Gastrocnemius medialis (tissue), 4 donors: ENCODE measurements at regions of chr11 and their contacts with region 1.

Region 1: DNA sequence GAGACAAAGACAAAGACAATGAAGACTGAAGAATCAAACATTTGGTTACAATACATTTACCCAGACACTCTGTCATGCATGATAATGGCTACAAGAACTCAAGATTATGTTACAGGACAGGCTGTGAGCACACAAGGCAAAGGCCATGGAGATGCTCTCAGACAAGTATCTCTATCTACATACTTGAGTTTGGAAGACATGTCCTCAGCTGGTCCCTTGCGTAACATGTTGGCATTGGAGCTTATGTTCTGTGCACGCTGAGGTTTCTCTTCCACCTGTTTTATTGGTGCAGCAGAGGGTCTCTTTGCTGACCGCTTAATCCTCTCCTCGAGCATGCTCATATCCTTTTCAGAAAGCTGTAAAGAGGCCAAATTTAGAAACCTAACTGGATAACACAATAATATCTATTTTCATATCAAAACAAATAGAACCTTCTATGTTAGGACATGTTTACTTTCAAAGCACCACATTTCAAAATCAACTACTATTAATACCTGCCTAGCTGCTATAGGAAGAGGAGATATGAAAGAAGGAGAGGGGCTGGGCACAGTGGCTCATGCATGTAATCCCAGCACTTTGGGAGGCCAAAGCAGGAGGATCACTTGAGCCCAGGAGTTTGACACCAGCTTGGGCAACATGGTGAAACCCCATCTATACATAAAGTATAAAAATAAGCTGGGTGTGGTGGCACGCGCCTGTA is 41.6 kb downstream of the F2 start:
- DNase-seq: peak; percentile 63 to 87
- ATAC-seq: peak; percentile 77 to 91
- H3K4me3 ChIP-seq: no peak overlapping the region
- H3K27ac ChIP-seq: peak overlapping the region; percentile 73 to 84 (median 82)
- H3K4me1 ChIP-seq: peaks cover 0 to 15% of the 10 kb centered on the region in 2 donors
- H3K27me3 ChIP-seq: no peaks in the 10 kb centered on the region
- CTCF ChIP-seq: no peak
- POLR2A ChIP-seq: peak in 1 of 2 donors; percentile 46

Region 2: DNA sequence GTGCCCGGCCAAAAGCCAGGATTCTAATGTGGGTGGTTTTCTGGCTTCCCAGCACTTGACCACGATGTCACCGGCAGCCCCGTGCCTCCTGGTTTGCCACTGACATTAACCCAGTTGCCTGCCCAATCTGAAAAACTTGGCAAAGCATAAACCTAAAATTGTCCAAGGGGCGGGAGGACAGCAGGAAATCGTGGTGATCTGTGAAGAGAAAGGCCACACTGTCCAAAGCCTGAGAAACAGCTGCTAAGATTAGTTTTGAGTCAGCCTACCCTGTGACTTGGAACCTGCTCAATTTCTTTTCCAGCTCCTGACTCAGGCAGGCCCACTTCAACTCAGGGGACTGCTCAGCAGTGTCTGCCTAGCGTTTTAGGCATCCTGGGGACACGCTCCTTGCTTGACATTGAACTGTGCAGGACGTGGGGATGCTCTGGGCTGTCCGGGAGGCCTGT is 49.7 kb before region 1 on chr11:
- in situ Hi-C with region 1: no loop called
- intact Hi-C with region 1: loop called (anchors 2 kb)
- DNase-seq: peak; percentile 92 to 94
- ATAC-seq: peak; percentile 94 to 97
- H3K4me3 ChIP-seq: no peak overlapping the region
- H3K27ac ChIP-seq: peak overlapping the region; percentile 84 to 100 (median 98)
- H3K4me1 ChIP-seq: peaks cover 20 to 46% of the 10 kb centered on the region in 2 donors
- H3K27me3 ChIP-seq: no peaks in the 10 kb centered on the region
- CTCF ChIP-seq: no peak
- POLR2A ChIP-seq: peak; percentile 45 to 63

Region 3: GRCh38 chr11:46800177-46800576 is 39.6 kb after region 1 on chr11:
- in situ Hi-C with region 1: no loop called
- intact Hi-C with region 1: loop called (anchors 5 kb)
- DNase-seq: no peak
- ATAC-seq: peak; percentile 99 to 100
- H3K4me3 ChIP-seq: no peak overlapping the region
- H3K27ac ChIP-seq: peak overlapping the region; percentile 76 to 89 (median 85)
- H3K4me1 ChIP-seq: peaks cover 13 to 24% of the 10 kb centered on the region in 2 donors
- H3K27me3 ChIP-seq: no peaks in the 10 kb centered on the region
- CTCF ChIP-seq: no peak
- POLR2A ChIP-seq: no peak